ENCODE measurements at regions of chr15 and their contacts with region 1.

Region 1: DNA sequence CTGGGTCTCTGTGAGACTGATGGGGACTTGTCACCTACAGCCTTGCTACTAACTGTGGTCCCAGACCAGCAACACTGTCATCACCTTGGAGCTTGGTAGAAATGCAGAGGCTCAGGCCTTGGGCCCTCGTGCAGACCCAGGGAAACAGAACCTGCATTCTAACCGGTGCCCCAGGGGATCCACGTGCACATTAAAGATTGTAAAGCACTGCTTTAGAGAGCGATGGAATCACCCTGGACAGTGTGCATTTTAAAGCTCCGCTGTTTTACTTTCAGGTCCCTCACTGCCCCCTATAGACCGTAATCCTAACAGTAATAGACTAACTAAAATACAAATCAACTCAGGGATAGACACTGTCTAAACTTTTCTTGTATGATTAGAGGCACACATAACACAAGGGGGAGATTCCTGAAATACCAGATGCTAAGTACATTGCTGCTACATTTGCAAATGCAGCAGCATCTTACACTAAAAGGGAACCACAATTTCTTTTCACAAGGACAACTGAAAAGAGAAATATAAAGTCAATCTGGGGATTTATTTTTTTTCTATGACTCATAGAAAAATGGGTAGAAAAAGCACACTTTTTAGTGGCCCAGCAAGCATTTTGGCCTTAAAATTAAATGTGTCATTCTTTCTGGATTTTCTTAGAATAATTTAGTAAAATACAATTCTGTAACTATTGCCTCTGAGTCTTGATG is 10.5 kb upstream of the SH3GL3 start:
- H3K4me3 ChIP-seq: no peak overlapping the region
- H3K27ac ChIP-seq: no peak overlapping the region
- H3K4me1 ChIP-seq: no peaks in the 10 kb centered on the region
- CTCF ChIP-seq: peak; percentile 45

Region 2: DNA sequence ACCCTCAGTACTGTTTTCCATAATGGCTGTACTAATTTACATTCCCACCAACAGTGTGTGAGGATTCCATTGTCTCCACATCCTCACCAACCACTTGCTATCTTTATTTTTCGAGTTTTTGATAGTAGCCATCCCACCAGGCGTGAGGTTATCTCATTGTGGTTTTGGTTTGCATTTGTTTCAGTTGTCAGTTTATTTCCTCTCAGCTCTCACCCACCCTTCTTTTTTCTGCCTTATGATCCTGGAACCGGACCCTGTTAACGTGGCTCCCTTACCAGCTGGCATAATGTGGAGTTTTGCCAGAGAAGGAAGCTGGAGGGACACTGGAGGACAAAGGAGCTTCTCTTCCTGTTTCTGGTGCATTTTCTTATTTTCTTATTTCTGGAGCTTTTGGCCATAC is 14.5 kb before region 1 on chr15:
- CTCF ChIA-PET with region 1: interaction called, 17 read pairs
- POLR2A ChIA-PET with region 1: no interaction called
- H3K4me3 ChIP-seq: no peak overlapping the region
- H3K27ac ChIP-seq: no peak overlapping the region
- H3K4me1 ChIP-seq: no peaks in the 10 kb centered on the region
- CTCF ChIP-seq: no peak

Region 3: GRCh38 chr15:83458381-83458780 is 21.8 kb after region 1 on chr15:
- CTCF ChIA-PET with region 1: interaction called, 12 read pairs
- POLR2A ChIA-PET with region 1: no interaction called
- H3K4me3 ChIP-seq: no peak overlapping the region
- H3K27ac ChIP-seq: no peak overlapping the region
- H3K4me1 ChIP-seq: peaks cover 7% of the 10 kb centered on the region
- CTCF ChIP-seq: no peak

Region 4: GRCh38 chr15:83475551-83475950 is 38.9 kb after region 1 on chr15:
- CTCF ChIA-PET with region 1: no interaction called
- POLR2A ChIA-PET with region 1: no interaction called
- H3K4me3 ChIP-seq: no peak overlapping the region
- H3K27ac ChIP-seq: no peak overlapping the region
- H3K4me1 ChIP-seq: peaks cover 6% of the 10 kb centered on the region
- CTCF ChIP-seq: no peak

Region 5: DNA sequence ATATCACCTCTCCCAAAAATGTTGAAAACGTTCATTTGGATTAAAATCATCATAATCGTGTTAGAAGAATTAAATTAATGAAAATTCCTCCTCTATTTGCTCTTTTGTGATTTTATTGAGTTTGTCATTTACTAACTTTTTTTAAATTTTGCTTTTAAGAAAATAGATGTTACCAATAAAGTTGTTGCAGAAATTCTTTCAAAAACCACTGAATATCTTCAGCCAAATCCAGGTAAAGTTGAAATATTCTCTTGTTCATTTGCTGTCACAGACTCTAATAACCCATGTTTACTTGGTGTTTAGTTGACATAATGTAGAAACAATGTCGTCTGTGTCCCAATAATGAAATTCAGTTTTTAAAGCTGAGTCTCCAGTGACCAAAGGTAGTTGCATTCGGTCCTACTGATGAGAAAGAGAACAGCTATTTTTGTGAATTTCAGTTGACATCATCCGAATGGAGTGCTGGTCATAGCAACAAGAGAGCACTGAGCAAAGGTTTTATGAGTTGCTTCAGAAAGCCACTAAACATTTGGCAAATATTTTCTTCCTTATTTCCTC is 128.4 kb after region 1 on chr15:
- CTCF ChIA-PET with region 1: interaction called, 247 read pairs
- POLR2A ChIA-PET with region 1: no interaction called
- H3K4me3 ChIP-seq: no peak overlapping the region
- H3K27ac ChIP-seq: no peak overlapping the region
- H3K4me1 ChIP-seq: no peaks in the 10 kb centered on the region
- CTCF ChIP-seq: no peak